Adrenal gland (tissue), 19 donors: ENCODE measurements at regions of chr12 and their contacts with region 1.

Region 1: DNA sequence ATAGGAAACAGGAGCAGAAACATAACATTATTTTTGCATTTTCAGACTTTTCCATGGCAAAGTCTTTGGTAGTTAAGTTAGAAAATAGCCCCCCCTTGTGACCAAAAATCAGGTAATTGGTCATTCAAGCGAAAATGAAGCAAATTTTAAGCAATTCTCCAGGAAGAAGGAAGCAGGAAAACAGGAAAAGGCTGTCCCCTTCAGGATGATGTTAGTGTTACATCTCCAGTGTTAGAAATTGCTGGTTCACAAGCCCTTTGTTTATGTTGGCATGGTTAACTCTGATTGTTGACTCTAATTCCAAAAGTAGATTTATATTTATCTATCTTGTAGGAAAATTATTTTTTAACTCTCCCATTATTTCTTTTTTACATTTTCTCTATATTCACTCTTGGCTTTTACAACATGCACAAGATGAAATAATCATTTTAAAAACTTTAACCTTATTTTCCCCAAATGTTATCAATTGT is 18.8 kb upstream of the GAS2L3 start:
- DNase-seq: peak in 5 of 7 donors; percentile 48 to 59 (median 51)
- H3K4me3 ChIP-seq: no peak overlapping the region
- H3K27ac ChIP-seq: peak overlapping the region in 3 of 5 donors; percentile 11 to 35 (median 15)
- H3K4me1 ChIP-seq: peaks cover 6 to 19% of the 10 kb centered on the region in 2 donors
- H3K27me3 ChIP-seq: no peaks in the 10 kb centered on the region
- CTCF ChIP-seq: peak; percentile 90 to 100 (median 99)
- POLR2A ChIP-seq: no peak

Region 2: GRCh38 chr12:100234598-100235304 is 319.9 kb before region 1 on chr12:
- intact Hi-C with region 1: loop called in 1 of 2 experiments (anchors 10 kb)
- DNase-seq: peak in 2 of 7 donors; percentile 24 to 27
- H3K4me3 ChIP-seq: peak overlapping the region in 1 of 4 donors; percentile 21
- H3K27ac ChIP-seq: peak overlapping the region in 3 of 5 donors; percentile 45 to 75 (median 65)
- H3K4me1 ChIP-seq: peaks cover 0 to 5% of the 10 kb centered on the region in 2 donors
- H3K27me3 ChIP-seq: no peaks in the 10 kb centered on the region
- CTCF ChIP-seq: peak; percentile 59 to 79 (median 76)
- POLR2A ChIP-seq: no peak

Region 3: DNA sequence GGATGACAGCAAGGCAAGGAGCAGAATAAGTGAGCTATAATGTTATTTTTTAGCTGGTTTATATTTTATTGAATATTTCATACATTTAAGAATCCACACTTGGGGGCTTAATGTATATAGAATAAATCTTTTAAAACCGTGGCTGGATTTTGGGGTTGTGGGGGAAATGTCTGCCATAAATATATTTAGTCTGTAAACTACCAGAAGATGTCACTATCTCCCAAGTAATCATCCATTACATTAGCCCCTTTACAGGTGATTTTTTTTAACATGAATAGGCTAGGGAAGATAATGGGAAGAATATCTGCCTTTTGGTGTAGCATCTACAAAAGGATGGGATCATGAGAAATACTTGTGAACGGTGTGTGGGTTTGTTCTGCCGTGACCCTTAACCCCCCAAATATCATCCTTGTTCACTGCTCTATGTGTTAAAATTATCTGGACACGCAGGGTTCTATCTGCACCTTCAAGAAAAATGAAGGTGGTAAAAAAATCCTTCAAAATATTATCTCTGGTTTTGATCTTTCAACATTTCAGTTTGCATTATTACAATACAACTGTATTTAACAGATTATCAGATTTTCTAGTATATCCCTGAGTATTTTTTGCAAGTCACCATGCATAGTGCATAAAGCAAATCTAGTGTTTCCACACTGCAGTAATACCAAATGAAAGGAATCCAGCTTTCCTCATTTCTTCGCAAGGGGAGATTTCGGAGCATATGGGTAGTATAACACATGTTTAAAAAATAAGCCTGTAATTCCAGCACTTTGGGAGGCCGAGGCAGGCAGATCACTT is 205.8 kb before region 1 on chr12:
- intact Hi-C with region 1: loop called in 1 of 2 experiments (anchors 5 kb)
- DNase-seq: no peak
- H3K4me3 ChIP-seq: no peak overlapping the region
- H3K27ac ChIP-seq: no peak overlapping the region
- H3K4me1 ChIP-seq: no peaks in the 10 kb centered on the region
- H3K27me3 ChIP-seq: no peaks in the 10 kb centered on the region
- CTCF ChIP-seq: peak in 5 of 6 experiments; percentile 48 to 67 (median 60)
- POLR2A ChIP-seq: no peak

Region 4: GRCh38 chr12:100391856-100392255 is 162.8 kb before region 1 on chr12:
- intact Hi-C with region 1: loop called (anchors 5 to 10 kb)
- DNase-seq: peak in 6 of 7 donors; percentile 34 to 65 (median 49)
- H3K4me3 ChIP-seq: no peak overlapping the region
- H3K27ac ChIP-seq: no peak overlapping the region
- H3K4me1 ChIP-seq: no peaks in the 10 kb centered on the region
- H3K27me3 ChIP-seq: no peaks in the 10 kb centered on the region
- CTCF ChIP-seq: peak; percentile 17 to 70 (median 60)
- POLR2A ChIP-seq: no peak

Region 5: DNA sequence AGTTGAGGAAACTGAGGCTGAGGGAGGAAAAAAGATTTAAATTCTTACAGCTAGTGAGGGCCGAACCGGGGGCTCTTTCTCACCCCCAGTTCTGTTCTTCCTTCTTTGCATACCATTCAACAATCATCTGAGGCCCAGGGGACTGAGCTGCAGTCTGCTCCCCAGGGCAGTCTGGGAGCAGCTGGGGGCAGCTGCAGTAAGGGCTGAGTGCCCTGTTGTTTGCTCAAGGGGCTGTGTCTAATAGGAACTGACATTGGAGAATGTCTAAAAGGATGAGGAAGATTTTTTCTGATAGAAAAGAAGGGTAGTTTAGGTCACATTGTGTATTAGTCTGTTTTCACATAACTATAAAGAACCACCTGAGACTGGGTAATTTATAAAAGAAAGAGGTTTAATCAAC is 155.5 kb before region 1 on chr12:
- intact Hi-C with region 1: loop called (anchors 5 to 10 kb)
- DNase-seq: no peak
- H3K4me3 ChIP-seq: no peak overlapping the region
- H3K27ac ChIP-seq: no peak overlapping the region
- H3K4me1 ChIP-seq: no peaks in the 10 kb centered on the region
- H3K27me3 ChIP-seq: no peaks in the 10 kb centered on the region
- CTCF ChIP-seq: no peak
- POLR2A ChIP-seq: no peak